Activated naive CD4-positive, alpha-beta T cell treated with anti-CD3 and anti-CD28 coated beads for 36 hours (primary cell): ENCODE measurements at regions of chr14 and their contacts with region 1.

Region 1: GRCh38 chr14:31400031-31400638 is 20.2 kb downstream of the HEATR5A start:
- DNase-seq: no peak
- H3K4me3 Mint-ChIP-seq: no peak overlapping the region
- H3K27ac Mint-ChIP-seq: no peak overlapping the region
- H3K4me1 Mint-ChIP-seq: peaks cover 5% of the 10 kb centered on the region
- H3K27me3 Mint-ChIP-seq: no peaks in the 10 kb centered on the region

Region 2: GRCh38 chr14:31326111-31326510 is 74.0 kb before region 1 on chr14:
- CTCF ChIA-PET with region 1: no interaction called
- intact Hi-C with region 1: no loop called
- DNase-seq: peak; percentile 13
- H3K4me3 Mint-ChIP-seq: no peak overlapping the region
- H3K27ac Mint-ChIP-seq: no peak overlapping the region
- H3K4me1 Mint-ChIP-seq: no peaks in the 10 kb centered on the region
- H3K27me3 Mint-ChIP-seq: no peaks in the 10 kb centered on the region

Region 3: DNA sequence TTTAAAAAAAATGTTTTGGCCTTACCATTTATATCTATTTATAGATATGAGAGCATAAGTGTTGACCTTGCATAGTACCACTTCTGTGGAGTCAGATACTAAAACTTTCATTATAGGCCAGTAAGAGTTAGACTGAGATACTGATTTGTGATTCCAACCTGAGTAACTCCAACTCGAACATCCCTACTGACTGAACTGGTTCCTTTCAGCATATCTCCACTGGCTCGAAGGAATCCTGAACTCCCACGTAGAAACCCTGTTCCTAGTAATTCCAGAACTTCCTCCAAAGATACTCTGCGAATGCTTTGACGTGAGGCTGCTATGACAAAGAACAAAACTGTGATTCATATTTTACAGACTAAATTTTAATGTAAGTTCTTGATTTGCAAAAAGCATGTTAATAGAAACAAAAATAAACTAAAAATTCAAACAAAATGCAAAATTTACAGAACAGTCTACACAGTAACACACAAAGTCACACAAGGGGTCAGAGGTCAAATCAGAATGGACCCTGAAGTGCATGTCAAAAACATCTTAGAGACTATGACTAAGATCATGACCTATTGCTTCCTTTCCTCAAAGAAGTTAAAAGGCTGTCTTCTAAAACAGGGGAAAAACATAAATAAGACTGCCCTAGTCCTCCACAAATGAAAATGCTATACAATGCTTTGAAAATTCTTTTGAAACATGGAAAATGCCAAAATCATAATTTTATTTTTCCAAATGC is 11.3 kb before region 1 on chr14:
- CTCF ChIA-PET with region 1: interaction called, 4 read pairs
- intact Hi-C with region 1: loop called (anchors 1 kb)
- DNase-seq: peak; percentile 17
- H3K4me3 Mint-ChIP-seq: no peak overlapping the region
- H3K27ac Mint-ChIP-seq: no peak overlapping the region
- H3K4me1 Mint-ChIP-seq: peaks cover 25% of the 10 kb centered on the region
- H3K27me3 Mint-ChIP-seq: no peaks in the 10 kb centered on the region